GM12878 (cell line): ENCODE measurements at regions of chr5 and their contacts with region 1.

Region 1: GRCh38 chr5:141618804-141619554 is at the start of gene DIAPH1:
- DNase-seq: peak; percentile 91
- ATAC-seq: peak; percentile 91
- H3K4me3 ChIP-seq: peak within 1 kb of the TSS; percentile 89
- H3K27ac ChIP-seq: peak within 1 kb of the TSS; percentile 84
- H3K4me1 ChIP-seq: peaks cover 16% of the 10 kb centered on the region
- H3K27me3 ChIP-seq: no peaks in the 10 kb centered on the region
- CTCF ChIP-seq: peak; percentile 95 to 99 (median 96); a peak in 5 of 6 replicates
- EP300 ChIP-seq: peak in 1 of 2 experiments; percentile 55; a peak in 2 of 4 replicates
- POLR2A ChIP-seq: peak; percentile 87
- RAD21 ChIP-seq: peak; percentile 80
- polyA plus RNA-seq, gene DIAPH1: 46.3 to 56.0 TPM

Region 2: GRCh38 chr5:140042643-140043500 is 1576.1 kb before region 1 on chr5 and contains the start of gene NRG2:
- CTCF ChIA-PET with region 1: no interaction called
- POLR2A ChIA-PET with region 1: no interaction called
- RAD21 ChIA-PET with region 1: no interaction called
- SMC1A ChIA-PET with region 1: no interaction called
- in situ Hi-C with region 1: loop called (anchors 25 kb)
- intact Hi-C with region 1: no loop called
- DNase-seq: no peak
- ATAC-seq: peak; percentile 82
- H3K4me3 ChIP-seq: peak within 1 kb of the TSS; percentile 89
- H3K27ac ChIP-seq: peak within 1 kb of the TSS; percentile 46
- H3K4me1 ChIP-seq: peaks cover 13% of the 10 kb centered on the region; the same call in 1 of the 2 replicates
- H3K27me3 ChIP-seq: no peaks in the 10 kb centered on the region
- CTCF ChIP-seq: peak; percentile 55 to 78 (median 76)
- EP300 ChIP-seq: no peak
- POLR2A ChIP-seq: peak; percentile 48
- RAD21 ChIP-seq: peak; percentile 17; the same call in 1 of the 2 replicates
- polyA plus RNA-seq, gene NRG2: 0.10 to 0.15 TPM

Region 3: GRCh38 chr5:140710899-140711552 is 908.0 kb before region 1 on chr5:
- CTCF ChIA-PET with region 1: no interaction called
- POLR2A ChIA-PET with region 1: no interaction called
- RAD21 ChIA-PET with region 1: no interaction called
- SMC1A ChIA-PET with region 1: no interaction called
- in situ Hi-C with region 1: no loop called
- intact Hi-C with region 1: loop called (anchors 10 kb)
- DNase-seq: peak; percentile 99
- ATAC-seq: peak; percentile 93
- H3K4me3 ChIP-seq: peak overlapping the region; percentile 66
- H3K27ac ChIP-seq: peak overlapping the region; percentile 67
- H3K4me1 ChIP-seq: no peaks in the 10 kb centered on the region
- H3K27me3 ChIP-seq: no peaks in the 10 kb centered on the region
- CTCF ChIP-seq: no peak
- EP300 ChIP-seq: peak; percentile 78 to 85; a peak in 3 of 4 replicates
- POLR2A ChIP-seq: peak; percentile 72
- RAD21 ChIP-seq: no peak

Region 4: GRCh38 chr5:141598391-141599350 is 20.3 kb before region 1 on chr5:
- CTCF ChIA-PET with region 1: interaction called, 517 read pairs
- POLR2A ChIA-PET with region 1: interaction called, 50 read pairs
- RAD21 ChIA-PET with region 1: interaction called, 299 read pairs
- SMC1A ChIA-PET with region 1: interaction called, 199 read pairs
- in situ Hi-C with region 1: no loop called
- intact Hi-C with region 1: no loop called
- DNase-seq: no peak
- ATAC-seq: peak; percentile 68
- H3K4me3 ChIP-seq: no peak overlapping the region
- H3K27ac ChIP-seq: no peak overlapping the region; the same call in 1 of the 2 replicates
- H3K4me1 ChIP-seq: peaks cover 11% of the 10 kb centered on the region
- H3K27me3 ChIP-seq: no peaks in the 10 kb centered on the region
- CTCF ChIP-seq: no peak
- EP300 ChIP-seq: no peak
- POLR2A ChIP-seq: no peak
- RAD21 ChIP-seq: no peak

Region 5: DNA sequence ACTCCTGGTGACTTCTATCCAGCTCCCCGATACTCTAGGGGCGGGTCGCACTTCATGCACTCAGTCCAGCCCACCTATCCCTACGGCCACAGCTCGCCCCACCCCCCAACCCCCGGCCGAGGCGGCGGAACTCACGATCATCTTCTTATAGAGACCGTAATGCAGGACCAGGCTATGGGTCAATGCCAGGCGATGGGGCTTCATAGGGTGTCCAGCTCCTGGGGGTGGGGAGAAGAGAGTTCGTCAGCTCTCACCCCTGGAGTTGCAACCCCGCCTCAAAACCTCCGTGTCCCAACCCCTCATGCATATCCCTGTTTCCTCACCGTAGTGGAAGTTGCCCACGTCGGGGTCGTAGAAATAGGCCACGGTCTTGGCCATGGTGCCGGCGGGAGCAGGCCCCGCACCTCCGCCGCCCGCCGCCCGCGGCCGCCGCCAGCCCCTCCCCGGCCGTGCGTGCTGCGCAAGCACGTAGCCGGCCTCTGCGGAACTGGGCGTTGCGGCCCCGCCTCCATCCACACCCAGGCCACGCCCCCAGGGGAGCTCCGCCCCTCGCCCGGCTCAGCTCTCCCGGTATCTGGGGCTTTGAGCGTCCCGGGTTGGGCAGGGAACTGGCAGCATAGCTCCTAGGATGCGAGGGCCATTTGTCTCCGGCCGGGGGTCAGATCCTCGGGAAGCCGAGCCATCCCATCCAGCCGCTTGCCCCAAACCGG is 17.6 kb after region 1 on chr5 and contains the starts of genes HDAC3 and RELL2:
- CTCF ChIA-PET with region 1: interaction called, 118 read pairs
- POLR2A ChIA-PET with region 1: interaction called, 215 read pairs
- RAD21 ChIA-PET with region 1: interaction called, 89 read pairs
- SMC1A ChIA-PET with region 1: interaction called, 245 read pairs
- in situ Hi-C with region 1: no loop called
- intact Hi-C with region 1: loop called (anchors 2 kb)
- DNase-seq: no peak
- ATAC-seq: peak; percentile 86
- H3K4me3 ChIP-seq: peak within 1 kb of the TSS; percentile 85
- H3K27ac ChIP-seq: peak within 1 kb of the TSS; percentile 86
- H3K4me1 ChIP-seq: peaks cover 41% of the 10 kb centered on the region
- H3K27me3 ChIP-seq: no peaks in the 10 kb centered on the region
- CTCF ChIP-seq: no peak
- EP300 ChIP-seq: no peak
- POLR2A ChIP-seq: peak; percentile 72
- RAD21 ChIP-seq: no peak
- polyA plus RNA-seq, gene HDAC3: 62.2 to 108 TPM
- polyA plus RNA-seq, gene RELL2: 0.23 to 0.64 TPM